Heart right ventricle (tissue), 16 donors: ENCODE measurements at regions of chr5 and their contacts with region 1.

Region 1: GRCh38 chr5:137075163-137075970 is 423.8 kb downstream of the SPOCK1 start:
- DNase-seq: peak; percentile 38 to 51
- ATAC-seq: peak in 6 of 8 donors; percentile 47 to 60 (median 52)
- H3K4me3 ChIP-seq: no peak overlapping the region
- H3K27ac ChIP-seq: no peak overlapping the region
- H3K4me1 ChIP-seq: peaks cover 0 to 26% (median 13%) of the 10 kb centered on the region in 9 donors
- H3K27me3 ChIP-seq: no peaks in the 10 kb centered on the region
- CTCF ChIP-seq: peak in 8 of 9 donors; percentile 35 to 60 (median 54)

Region 2: DNA sequence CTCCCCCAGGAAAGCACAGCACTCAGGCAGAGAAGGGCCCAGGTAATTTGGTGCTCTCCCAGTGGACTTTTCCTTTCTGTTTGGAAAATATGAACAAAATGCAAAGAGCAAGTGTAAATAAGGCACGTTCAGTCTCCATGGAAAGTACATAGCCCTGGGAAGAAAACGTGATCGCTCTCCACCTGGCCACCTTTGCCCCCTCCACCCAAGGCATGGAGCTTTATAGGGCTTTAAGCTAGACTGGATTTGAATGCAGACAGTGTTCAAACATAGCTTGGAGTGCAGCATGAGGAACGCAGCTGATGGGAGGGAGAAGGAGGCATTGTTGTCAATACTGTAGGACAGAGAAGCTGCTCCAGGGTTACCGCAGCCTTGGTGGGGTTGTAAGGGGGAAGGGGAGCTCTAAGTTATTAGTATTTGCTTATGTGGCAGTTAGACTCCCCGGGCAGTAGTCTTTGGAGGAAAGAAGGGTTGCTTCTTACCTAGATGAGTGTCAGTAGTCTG is 76.5 kb before region 1 on chr5:
- intact Hi-C with region 1: no loop called
- DNase-seq: no peak
- ATAC-seq: no peak
- H3K4me3 ChIP-seq: no peak overlapping the region
- H3K27ac ChIP-seq: no peak overlapping the region
- H3K4me1 ChIP-seq: peaks cover 0 to 25% (median 3%) of the 10 kb centered on the region in 9 donors
- H3K27me3 ChIP-seq: no peaks in the 10 kb centered on the region
- CTCF ChIP-seq: no peak

Region 3: GRCh38 chr5:137220523-137220927 is 145.2 kb after region 1 on chr5:
- intact Hi-C with region 1: loop called in 1 of 10 experiments (anchors 10 kb)
- DNase-seq: no peak
- ATAC-seq: peak in 6 of 8 donors; percentile 46 to 90 (median 66)
- H3K4me3 ChIP-seq: no peak overlapping the region
- H3K27ac ChIP-seq: no peak overlapping the region
- H3K4me1 ChIP-seq: peaks cover 0 to 16% (median 0%) of the 10 kb centered on the region in 9 donors
- H3K27me3 ChIP-seq: no peaks in the 10 kb centered on the region
- CTCF ChIP-seq: peak in 8 of 9 donors; percentile 12 to 64 (median 52)

Region 4: GRCh38 chr5:137282216-137282615 is 206.8 kb after region 1 on chr5:
- intact Hi-C with region 1: loop called in 1 of 10 experiments (anchors 10 kb)
- DNase-seq: no peak
- ATAC-seq: peak; percentile 65 to 93 (median 83)
- H3K4me3 ChIP-seq: no peak overlapping the region
- H3K27ac ChIP-seq: peak overlapping the region in 6 of 10 donors; percentile 54 to 82 (median 60)
- H3K4me1 ChIP-seq: peaks cover 0 to 50% (median 16%) of the 10 kb centered on the region in 9 donors
- H3K27me3 ChIP-seq: no peaks in the 10 kb centered on the region
- CTCF ChIP-seq: no peak

Region 5: DNA sequence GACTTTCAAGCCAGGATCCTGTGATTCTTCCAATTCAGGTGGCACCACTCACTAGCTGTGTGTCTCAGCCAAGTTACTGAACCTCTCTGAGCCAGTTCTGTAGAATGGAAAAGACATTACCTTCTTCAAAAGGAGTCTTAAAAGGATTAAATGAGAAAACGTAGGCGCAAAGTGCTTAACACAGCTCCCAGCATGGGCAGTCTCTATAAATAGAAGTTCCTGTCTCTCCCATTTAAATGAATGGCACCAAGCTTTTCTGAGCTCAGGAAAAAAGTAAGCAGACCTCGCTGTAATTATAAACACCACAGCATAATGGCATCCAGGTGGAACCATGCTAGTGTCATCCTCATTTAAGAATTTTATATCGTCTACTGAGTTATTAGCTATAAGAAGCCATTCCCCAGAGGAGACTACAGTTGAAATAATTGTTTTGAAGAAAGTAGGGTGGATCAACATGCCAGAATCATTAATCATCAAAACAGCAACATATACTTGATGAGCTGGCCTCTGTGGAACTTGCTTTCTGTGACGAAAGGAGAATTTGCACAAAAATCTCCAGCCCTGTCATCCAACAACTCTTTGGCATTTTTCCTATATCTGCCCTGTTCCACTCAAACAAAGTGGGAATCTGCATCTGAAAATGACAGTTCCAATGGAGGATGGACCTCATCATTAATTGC is 234.8 kb after region 1 on chr5:
- intact Hi-C with region 1: loop called in 1 of 10 experiments (anchors 10 kb)
- DNase-seq: no peak
- ATAC-seq: peak in 2 of 8 donors; percentile 9 to 36
- H3K4me3 ChIP-seq: no peak overlapping the region
- H3K27ac ChIP-seq: peak overlapping the region in 1 of 10 donors; percentile 10
- H3K4me1 ChIP-seq: peaks cover 0 to 30% (median 10%) of the 10 kb centered on the region in 9 donors
- H3K27me3 ChIP-seq: no peaks in the 10 kb centered on the region
- CTCF ChIP-seq: no peak

Region 6: GRCh38 chr5:137361280-137361679 is 285.9 kb after region 1 on chr5:
- intact Hi-C with region 1: no loop called
- DNase-seq: no peak
- ATAC-seq: no peak
- H3K4me3 ChIP-seq: no peak overlapping the region
- H3K27ac ChIP-seq: no peak overlapping the region
- H3K4me1 ChIP-seq: no peaks in the 10 kb centered on the region
- H3K27me3 ChIP-seq: peaks cover 0 to 11% (median 4%) of the 10 kb centered on the region in 7 donors
- CTCF ChIP-seq: no peak